Dendritic cell treated with granulocyte-macrophage colony-stimulating factor and Interleukin-4, amounts not matched to agents 40 ng/mL and 50 ng/mL, for 4 days (primary cell): ENCODE measurements at regions of chr19 and their contacts with region 1.

Region 1: DNA sequence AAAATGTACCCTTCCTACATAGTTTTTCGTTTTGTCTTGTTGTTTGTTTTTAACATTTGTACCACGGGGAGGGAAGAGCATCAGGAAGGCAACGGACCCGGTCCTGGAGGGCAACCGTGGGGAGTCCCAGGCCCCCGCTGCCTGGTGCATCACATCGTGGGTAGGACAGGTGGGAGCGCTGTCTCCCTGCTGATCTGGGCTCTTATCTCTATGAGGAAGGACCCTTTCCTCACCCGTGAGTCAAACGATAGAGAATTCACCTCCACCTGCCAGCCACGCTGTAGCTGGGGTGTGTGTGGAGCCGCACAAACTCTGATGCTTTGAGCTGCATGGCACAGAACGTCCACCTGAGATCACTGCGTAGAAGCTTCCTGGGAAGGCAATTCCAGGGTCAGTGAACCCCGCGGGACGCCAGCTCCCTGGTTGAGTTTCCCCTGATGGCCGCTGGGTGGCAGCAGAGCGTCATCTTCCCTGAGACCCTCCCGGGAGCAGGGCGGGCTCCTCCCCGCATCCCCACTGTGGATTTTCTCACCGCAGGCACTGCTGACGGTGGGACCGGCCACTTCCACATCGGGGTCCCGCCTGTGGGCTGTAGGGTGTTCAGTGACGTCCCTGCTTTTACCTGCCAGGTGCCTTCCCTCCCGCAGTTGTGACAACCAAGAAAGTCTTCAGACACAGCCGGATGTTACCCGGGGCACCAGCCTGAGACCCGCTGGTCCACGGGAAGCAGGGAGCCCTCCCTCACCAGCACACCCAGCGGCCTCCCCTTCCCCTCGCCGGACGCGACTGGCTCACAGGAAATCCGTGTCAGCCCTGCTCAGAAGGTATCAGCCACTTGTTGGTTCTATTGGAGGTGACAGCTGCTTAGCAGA is 54.7 kb downstream of the ZNF787 start:
- H3K4me3 Mint-ChIP-seq: no peak overlapping the region
- H3K27ac Mint-ChIP-seq: no peak overlapping the region
- H3K4me1 Mint-ChIP-seq: peaks cover 10% of the 10 kb centered on the region
- H3K27me3 Mint-ChIP-seq: peaks cover 22% of the 10 kb centered on the region

Region 2: GRCh38 chr19:55632463-55632834 is 433.9 kb before region 1 on chr19:
- intact Hi-C with region 1: loop called (anchors 5 kb)
- H3K4me3 Mint-ChIP-seq: no peak overlapping the region
- H3K27ac Mint-ChIP-seq: peak overlapping the region; percentile 38
- H3K4me1 Mint-ChIP-seq: peaks cover 37% of the 10 kb centered on the region
- H3K27me3 Mint-ChIP-seq: no peaks in the 10 kb centered on the region

Region 3: GRCh38 chr19:56350416-56351045 is 284.1 kb after region 1 on chr19:
- intact Hi-C with region 1: loop called (anchors 10 kb)
- H3K4me3 Mint-ChIP-seq: no peak overlapping the region
- H3K27ac Mint-ChIP-seq: no peak overlapping the region
- H3K4me1 Mint-ChIP-seq: no peaks in the 10 kb centered on the region
- H3K27me3 Mint-ChIP-seq: no peaks in the 10 kb centered on the region